H1 (cell line): ENCODE measurements at regions of chr5 and their contacts with region 1.

Region 1: GRCh38 chr5:134465816-134466240 is 54.1 kb upstream of the CDKN2AIPNL start:
- DNase-seq: peak; percentile 47 to 95
- H3K4me3 ChIP-seq: peak overlapping the region; percentile 62 to 80 (median 68)
- H3K27ac ChIP-seq: peak overlapping the region; percentile 75; the same call in 1 of the 2 replicates
- H3K4me1 ChIP-seq: peaks cover 2 to 19% (median 5%) of the 10 kb centered on the region in 4 experiments
- H3K27me3 ChIP-seq: no peaks in the 10 kb centered on the region
- CTCF ChIP-seq: no peak
- EP300 ChIP-seq: no peak
- POLR2A ChIP-seq: peak in 1 of 2 experiments; percentile 57; a peak in 1 of 3 replicates
- RAD21 ChIP-seq: no peak; a peak in 1 of 4 replicates

Region 2: DNA sequence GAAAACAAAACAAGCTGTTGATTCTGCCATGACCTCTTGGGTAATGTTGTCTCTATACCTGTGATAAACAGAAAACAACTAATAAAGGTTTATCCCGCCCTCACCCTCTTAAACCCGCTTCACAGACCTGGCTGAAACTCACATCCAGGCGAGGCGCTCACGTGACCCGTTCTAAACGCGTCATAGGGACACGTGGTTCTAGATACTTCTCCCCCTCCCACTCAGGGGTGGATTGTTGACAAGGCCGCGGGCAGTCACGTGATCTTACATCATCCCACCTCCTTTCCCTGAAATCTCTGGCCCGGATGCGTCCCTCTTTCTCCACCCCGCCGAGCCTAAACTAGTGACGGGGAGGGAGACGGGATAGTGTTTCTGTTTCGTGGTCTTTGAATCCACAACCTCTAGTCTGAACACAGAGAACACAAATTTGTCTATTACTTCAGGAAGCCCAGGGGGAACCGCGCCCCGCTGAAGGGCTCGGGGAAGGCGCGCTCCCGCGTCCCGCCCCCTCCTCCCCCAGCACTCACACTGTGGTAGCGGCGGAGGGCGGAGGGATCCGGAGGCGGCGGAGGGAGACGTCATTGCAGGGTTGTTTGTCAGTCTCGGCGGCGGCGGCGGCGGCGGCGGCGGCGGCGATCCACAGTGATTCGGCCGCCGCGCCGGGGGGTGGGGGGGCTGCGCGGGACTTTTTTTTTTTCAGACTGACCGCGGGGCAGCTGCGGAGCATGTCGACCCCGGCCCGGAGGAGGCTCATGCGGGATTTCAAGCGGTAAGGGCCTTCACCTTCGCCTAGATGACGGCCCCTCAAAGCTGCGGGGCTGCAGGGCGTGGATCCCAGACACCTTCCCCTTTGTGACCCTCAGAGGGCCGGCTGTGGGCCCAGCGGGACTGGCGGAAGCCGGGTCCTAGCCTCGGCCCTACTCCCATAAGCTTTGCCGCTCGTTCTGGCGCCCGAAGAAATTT is 94.7 kb before region 1 on chr5 and contains the start of gene UBE2B:
- CTCF ChIA-PET with region 1: no interaction called
- POLR2A ChIA-PET with region 1: interaction called, 15 read pairs
- DNase-seq: peak; percentile 92 to 97
- H3K4me3 ChIP-seq: peak within 1 kb of the TSS; percentile 83 to 97 (median 91)
- H3K27ac ChIP-seq: peak within 1 kb of the TSS; percentile 98
- H3K4me1 ChIP-seq: no peaks in the 10 kb centered on the region; a peak in 3 of 7 replicates
- H3K27me3 ChIP-seq: no peaks in the 10 kb centered on the region
- CTCF ChIP-seq: no peak
- EP300 ChIP-seq: peak in 1 of 2 experiments; percentile 99; a peak in 2 of 3 replicates
- POLR2A ChIP-seq: peak; percentile 24 to 68
- RAD21 ChIP-seq: no peak
- total RNA-seq, gene UBE2B: 40.3 and 46.8 TPM in 2 replicates

Region 3: DNA sequence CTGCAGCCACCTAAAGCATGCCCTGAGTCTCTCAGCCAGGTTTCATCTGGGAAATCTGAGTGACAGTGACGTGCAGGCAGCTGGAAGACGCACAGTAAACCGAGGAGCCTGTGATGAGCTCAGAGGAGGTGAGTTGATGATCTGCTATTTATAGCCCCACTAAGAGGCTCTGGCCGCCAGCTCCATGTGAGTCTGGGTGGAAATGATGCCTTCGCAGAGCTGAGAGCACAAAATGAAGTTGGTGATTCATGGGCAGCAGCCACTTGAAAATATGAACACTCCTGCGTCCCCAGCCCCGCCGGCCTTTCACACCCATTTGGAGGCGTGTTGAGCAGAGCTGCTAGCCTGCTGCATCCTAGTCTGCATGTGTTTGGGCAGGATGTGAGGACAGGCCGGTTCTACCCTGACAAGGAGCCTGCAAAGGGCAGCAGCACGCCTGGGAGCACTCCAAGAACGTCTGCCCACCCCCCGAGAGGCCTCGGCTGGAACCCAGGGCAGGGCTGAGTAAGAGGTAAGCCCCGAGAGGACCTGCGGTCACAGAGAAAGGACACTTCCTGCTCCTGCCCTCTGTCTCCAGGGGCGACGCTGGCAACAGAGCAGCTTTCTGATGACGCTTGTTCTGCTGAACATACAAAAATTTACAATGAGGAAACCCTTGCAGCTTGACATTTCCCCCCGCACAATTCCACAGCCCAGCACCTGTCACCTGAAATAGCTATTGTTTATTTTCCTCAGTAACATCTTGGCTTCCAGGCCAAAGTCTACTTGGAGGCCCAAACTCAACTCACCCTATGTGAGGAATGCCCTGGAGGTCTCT is 29.1 kb before region 1 on chr5:
- CTCF ChIA-PET with region 1: interaction called, 5 read pairs
- POLR2A ChIA-PET with region 1: interaction called, 19 read pairs
- DNase-seq: no peak
- H3K4me3 ChIP-seq: no peak overlapping the region
- H3K27ac ChIP-seq: no peak overlapping the region
- H3K4me1 ChIP-seq: peaks cover 0 to 11% (median 7%) of the 10 kb centered on the region in 4 experiments; a peak in 3 of 7 replicates
- H3K27me3 ChIP-seq: no peaks in the 10 kb centered on the region
- CTCF ChIP-seq: no peak
- EP300 ChIP-seq: no peak
- POLR2A ChIP-seq: no peak
- RAD21 ChIP-seq: no peak

Region 4: DNA sequence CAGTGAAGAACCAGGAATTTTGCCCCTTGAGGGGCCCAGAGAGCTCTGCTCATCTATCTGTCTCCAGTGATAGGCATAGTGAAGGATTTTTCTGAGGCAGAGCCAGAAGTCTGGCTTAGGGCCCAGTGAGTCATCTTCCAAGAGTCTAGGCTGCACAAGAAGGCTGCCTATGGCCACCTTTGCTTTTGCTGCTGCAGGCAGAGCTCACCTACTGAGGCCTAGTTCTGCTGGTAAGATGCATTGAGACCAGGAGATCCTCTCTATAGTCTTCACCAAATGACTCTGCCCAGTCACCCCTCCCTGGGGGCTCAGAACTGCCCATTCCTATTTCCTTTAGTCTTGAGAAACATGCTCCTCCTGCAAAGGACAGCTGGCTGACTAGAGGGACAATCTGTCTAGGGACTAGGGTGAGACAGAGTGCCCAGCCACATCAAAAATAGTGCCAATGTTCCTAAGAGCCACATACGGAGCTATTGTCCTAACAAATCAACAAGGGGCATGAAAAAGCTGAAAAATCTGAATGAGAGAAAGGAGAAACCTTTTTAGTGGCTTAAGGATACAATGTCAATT is 13.8 kb before region 1 on chr5:
- CTCF ChIA-PET with region 1: interaction called, 13 read pairs
- POLR2A ChIA-PET with region 1: interaction called, 14 read pairs
- DNase-seq: no peak
- H3K4me3 ChIP-seq: no peak overlapping the region
- H3K27ac ChIP-seq: no peak overlapping the region
- H3K4me1 ChIP-seq: peaks cover 0 to 2% (median 0%) of the 10 kb centered on the region in 4 experiments; a peak in 1 of 7 replicates
- H3K27me3 ChIP-seq: no peaks in the 10 kb centered on the region
- CTCF ChIP-seq: no peak
- EP300 ChIP-seq: no peak
- POLR2A ChIP-seq: no peak
- RAD21 ChIP-seq: no peak

Region 5: GRCh38 chr5:134503088-134503946 is 37.5 kb after region 1 on chr5:
- CTCF ChIA-PET with region 1: interaction called, 7 read pairs
- POLR2A ChIA-PET with region 1: interaction called, 24 read pairs
- DNase-seq: peak in 1 of 2 experiments; percentile 59
- H3K4me3 ChIP-seq: no peak overlapping the region
- H3K27ac ChIP-seq: peak overlapping the region; percentile 18; the same call in 1 of the 2 replicates
- H3K4me1 ChIP-seq: peaks cover 3 to 19% (median 16%) of the 10 kb centered on the region in 4 experiments; a peak in 6 of 7 replicates
- H3K27me3 ChIP-seq: no peaks in the 10 kb centered on the region
- CTCF ChIP-seq: no peak
- EP300 ChIP-seq: no peak
- POLR2A ChIP-seq: no peak
- RAD21 ChIP-seq: no peak

Region 6: DNA sequence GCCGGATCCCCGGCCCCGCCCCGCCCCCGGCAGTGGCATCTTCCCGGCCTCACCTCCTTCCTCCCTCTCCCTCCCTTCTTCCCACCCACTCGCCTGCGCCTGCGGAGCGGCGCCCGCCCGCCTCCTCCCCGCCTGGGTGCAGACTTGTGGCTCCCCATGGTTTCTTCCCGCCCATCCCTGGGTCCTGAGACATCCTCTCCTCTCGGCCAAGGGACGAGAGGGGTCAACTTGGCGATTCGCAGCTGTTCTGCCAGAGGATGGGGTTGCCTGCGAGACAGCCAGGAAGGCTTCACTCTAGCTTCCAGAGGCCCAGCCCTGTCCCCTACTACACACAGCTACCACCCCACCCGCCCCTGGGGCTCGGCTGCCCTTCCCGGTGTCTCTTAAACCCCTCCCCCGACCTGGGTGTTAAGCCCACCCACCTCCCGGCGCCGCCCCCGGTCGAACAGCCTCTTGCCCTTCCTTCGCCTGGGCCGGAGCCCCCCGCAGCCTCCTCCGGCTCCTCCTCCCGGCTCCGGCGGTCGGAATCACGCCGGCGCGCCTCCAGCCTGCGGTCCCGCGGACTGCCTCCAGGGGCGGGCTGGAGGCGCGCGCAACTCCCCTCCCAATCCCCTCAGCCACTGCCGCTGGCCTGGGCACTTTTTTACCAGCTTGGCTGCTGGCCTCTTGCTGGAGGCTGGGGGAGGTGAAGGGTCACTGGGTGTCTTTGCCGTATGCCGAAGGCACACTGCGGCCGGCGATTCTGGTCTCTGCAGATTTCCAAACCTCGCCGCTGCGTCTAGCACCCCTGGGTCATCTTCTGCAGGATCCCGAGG is 61.5 kb after region 1 on chr5:
- CTCF ChIA-PET with region 1: interaction called, 36 read pairs
- POLR2A ChIA-PET with region 1: interaction called, 57 read pairs
- DNase-seq: peak; percentile 91 to 93
- H3K4me3 ChIP-seq: peak overlapping the region; percentile 68 to 85 (median 77)
- H3K27ac ChIP-seq: peak overlapping the region; percentile 62
- H3K4me1 ChIP-seq: peaks cover 21 to 38% (median 27%) of the 10 kb centered on the region in 4 experiments
- H3K27me3 ChIP-seq: no peaks in the 10 kb centered on the region
- CTCF ChIP-seq: peak in 2 of 3 experiments; percentile 76 to 81; a peak in 3 of 4 replicates
- EP300 ChIP-seq: no peak
- POLR2A ChIP-seq: no peak; a peak in 1 of 3 replicates
- RAD21 ChIP-seq: peak; percentile 58 to 75

Region 7: GRCh38 chr5:134577796-134578363 is 112.1 kb after region 1 on chr5:
- CTCF ChIA-PET with region 1: interaction called, 16 read pairs
- POLR2A ChIA-PET with region 1: no interaction called
- DNase-seq: peak; percentile 69 to 94
- H3K4me3 ChIP-seq: no peak overlapping the region
- H3K27ac ChIP-seq: no peak overlapping the region
- H3K4me1 ChIP-seq: no peaks in the 10 kb centered on the region; a peak in 1 of 7 replicates
- H3K27me3 ChIP-seq: no peaks in the 10 kb centered on the region
- CTCF ChIP-seq: peak in 2 of 3 experiments; percentile 93 to 98; a peak in 3 of 4 replicates
- EP300 ChIP-seq: no peak
- POLR2A ChIP-seq: no peak
- RAD21 ChIP-seq: peak; percentile 92 to 93